SK-N-SH (cell line): ENCODE measurements at regions of chr9 and their contacts with region 1.

Region 1: DNA sequence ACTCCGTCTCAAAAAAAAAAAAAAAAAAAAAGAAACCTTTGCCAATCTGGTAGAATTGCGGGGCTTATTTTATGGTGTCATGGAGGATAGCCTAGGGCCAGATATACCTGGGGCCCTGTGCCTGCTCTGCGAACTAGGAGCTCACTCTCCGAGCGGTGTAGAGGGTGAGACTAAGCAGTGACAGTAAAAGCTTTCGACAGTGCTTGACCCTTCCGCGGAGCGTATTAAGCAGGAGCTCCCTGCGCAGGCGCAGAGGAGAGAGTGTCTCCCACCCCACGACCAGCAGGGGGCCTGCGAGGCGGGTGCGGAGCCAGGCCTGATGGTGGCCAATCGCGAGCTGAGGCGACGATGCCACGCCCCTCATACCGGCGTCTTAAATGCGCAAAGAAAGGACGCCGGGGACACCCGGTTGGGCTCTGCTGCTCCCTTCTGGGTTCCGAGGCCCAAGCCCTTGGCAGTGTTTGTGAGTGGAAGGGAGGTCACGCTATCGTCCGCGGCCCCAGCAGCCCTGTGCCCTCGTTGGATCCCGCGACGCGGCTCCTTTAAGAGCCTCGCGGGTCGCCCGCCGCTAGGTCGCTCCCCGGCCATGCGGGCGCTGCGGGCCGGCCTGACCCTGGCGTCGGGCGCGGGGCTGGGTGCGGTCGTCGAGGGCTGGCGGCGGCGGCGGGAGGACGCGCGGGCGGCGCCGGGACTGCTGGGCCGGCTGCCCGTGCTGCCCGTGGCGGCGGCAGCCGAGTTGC is at the start of gene ENDOG:
- DNase-seq: peak; percentile 99
- H3K4me3 ChIP-seq: peak within 1 kb of the TSS; percentile 60 to 72
- H3K27ac ChIP-seq: peak within 1 kb of the TSS; percentile 37 to 83; a peak in 3 of 4 replicates
- H3K4me1 ChIP-seq: peaks cover 0 to 17% of the 10 kb centered on the region in 2 experiments; a peak in 1 of 4 replicates
- H3K27me3 ChIP-seq: no peaks in the 10 kb centered on the region
- CTCF ChIP-seq: peak; percentile 81
- EP300 ChIP-seq: no peak
- RAD21 ChIP-seq: peak; percentile 34; the same call in 1 of the 2 replicates
- polyA plus RNA-seq, gene ENDOG: 22.2 and 26.6 TPM in 2 replicates

Region 2: GRCh38 chr9:128702445-128702948 is 115.8 kb before region 1 on chr9 and contains the start of gene PKN3:
- CTCF ChIA-PET with region 1: interaction called, 22 read pairs
- POLR2A ChIA-PET with region 1: interaction called, 6 read pairs
- DNase-seq: peak; percentile 98
- H3K4me3 ChIP-seq: peak within 1 kb of the TSS; percentile 68 to 85
- H3K27ac ChIP-seq: peak within 1 kb of the TSS in 1 of 2 experiments; percentile 38; a peak in 2 of 4 replicates
- H3K4me1 ChIP-seq: peaks cover 0 to 4% of the 10 kb centered on the region in 2 experiments; a peak in 1 of 4 replicates
- H3K27me3 ChIP-seq: no peaks in the 10 kb centered on the region
- CTCF ChIP-seq: peak; percentile 96
- EP300 ChIP-seq: no peak
- RAD21 ChIP-seq: peak; percentile 35
- polyA plus RNA-seq, gene PKN3: 5.0 and 7.8 TPM in 2 replicates

Region 3: DNA sequence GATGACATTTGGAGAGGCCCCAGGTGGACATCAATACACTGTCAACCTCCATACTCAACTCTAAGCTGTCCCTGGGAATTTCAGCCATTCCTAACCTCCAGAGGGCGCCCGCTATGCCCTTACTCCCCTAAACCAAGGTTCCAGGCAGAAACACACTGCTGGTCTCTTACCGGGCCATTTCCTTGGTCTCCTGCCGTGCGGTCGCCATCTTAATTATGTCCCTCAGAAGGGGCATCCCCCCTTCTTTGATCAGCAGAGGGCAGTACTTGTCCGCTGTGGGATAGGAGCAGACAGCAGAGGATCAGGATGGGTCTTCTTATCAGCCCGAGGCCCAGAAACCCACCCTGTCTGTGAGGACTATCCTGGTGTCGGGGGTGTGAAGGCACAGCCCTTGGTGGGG is 85.0 kb before region 1 on chr9:
- CTCF ChIA-PET with region 1: interaction called, 28 read pairs
- POLR2A ChIA-PET with region 1: interaction called, 4 read pairs
- DNase-seq: peak; percentile 82
- H3K4me3 ChIP-seq: peak overlapping the region in 1 of 2 experiments; percentile 47; a peak in 1 of 4 replicates
- H3K27ac ChIP-seq: peak overlapping the region in 1 of 2 experiments; percentile 37; a peak in 1 of 4 replicates
- H3K4me1 ChIP-seq: peaks cover 0 to 32% of the 10 kb centered on the region in 2 experiments; a peak in 1 of 4 replicates
- H3K27me3 ChIP-seq: no peaks in the 10 kb centered on the region
- CTCF ChIP-seq: peak; percentile 68
- EP300 ChIP-seq: no peak
- RAD21 ChIP-seq: peak; percentile 65

Region 4: GRCh38 chr9:128787604-128788041 is 30.6 kb before region 1 on chr9:
- CTCF ChIA-PET with region 1: interaction called, 14 read pairs
- POLR2A ChIA-PET with region 1: interaction called, 6 read pairs
- DNase-seq: no peak
- H3K4me3 ChIP-seq: peak overlapping the region; percentile 74 to 93
- H3K27ac ChIP-seq: peak overlapping the region; percentile 48 to 56; a peak in 2 of 4 replicates
- H3K4me1 ChIP-seq: peaks cover 0 to 10% of the 10 kb centered on the region in 2 experiments; a peak in 1 of 4 replicates
- H3K27me3 ChIP-seq: no peaks in the 10 kb centered on the region
- CTCF ChIP-seq: no peak
- EP300 ChIP-seq: no peak
- RAD21 ChIP-seq: no peak

Region 5: DNA sequence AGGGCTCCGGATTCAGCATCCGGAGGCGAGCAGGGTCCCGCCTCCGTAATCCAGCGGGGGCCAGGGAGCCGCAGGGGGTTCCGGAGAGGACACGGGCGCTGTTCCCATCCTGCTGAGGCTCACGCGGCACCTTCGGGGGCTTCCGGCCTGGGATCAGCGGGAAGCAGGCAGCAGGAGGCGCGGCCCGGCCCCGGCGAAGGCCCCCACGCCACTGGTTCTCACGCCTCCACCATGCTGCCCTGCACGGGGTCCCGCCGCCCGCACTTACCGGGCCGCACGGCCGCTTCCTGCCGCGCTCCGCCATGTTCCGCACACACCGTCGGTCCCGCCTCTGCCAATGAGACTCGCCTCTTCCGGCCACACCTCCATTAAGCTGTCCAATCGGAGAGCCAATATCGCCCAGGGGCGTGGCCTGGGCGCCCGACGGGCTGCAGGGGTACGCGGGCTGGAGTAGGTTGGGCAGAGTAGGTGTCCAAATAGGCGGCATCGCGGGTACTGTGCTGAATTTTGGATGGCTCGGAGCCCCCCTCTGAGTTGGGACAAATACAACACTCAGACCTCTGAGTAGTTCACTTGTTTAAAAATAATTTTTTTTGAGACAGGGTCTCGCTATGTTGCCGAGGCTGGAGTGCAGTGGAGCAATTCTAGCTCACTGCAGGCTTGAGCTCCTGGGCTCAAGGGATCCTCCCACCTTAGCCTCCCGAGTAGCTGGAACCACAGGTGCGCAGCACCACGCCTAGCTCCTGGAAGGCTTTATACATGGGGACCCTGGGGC is 11.4 kb after region 1 on chr9 and contains the start of gene SPOUT1:
- CTCF ChIA-PET with region 1: interaction called, 34 read pairs
- POLR2A ChIA-PET with region 1: interaction called, 13 read pairs
- DNase-seq: peak; percentile 98
- H3K4me3 ChIP-seq: peak within 1 kb of the TSS; percentile 70 to 75
- H3K27ac ChIP-seq: peak within 1 kb of the TSS; percentile 42 to 61; a peak in 3 of 4 replicates
- H3K4me1 ChIP-seq: peaks cover 0 to 6% of the 10 kb centered on the region in 2 experiments; a peak in 1 of 4 replicates
- H3K27me3 ChIP-seq: no peaks in the 10 kb centered on the region
- CTCF ChIP-seq: no peak
- EP300 ChIP-seq: no peak
- RAD21 ChIP-seq: no peak
- polyA plus RNA-seq, gene SPOUT1: 43.5 and 44.2 TPM in 2 replicates